GM18951 (cell line): ENCODE measurements at regions of chr4 and their contacts with region 1.

Region 1: DNA sequence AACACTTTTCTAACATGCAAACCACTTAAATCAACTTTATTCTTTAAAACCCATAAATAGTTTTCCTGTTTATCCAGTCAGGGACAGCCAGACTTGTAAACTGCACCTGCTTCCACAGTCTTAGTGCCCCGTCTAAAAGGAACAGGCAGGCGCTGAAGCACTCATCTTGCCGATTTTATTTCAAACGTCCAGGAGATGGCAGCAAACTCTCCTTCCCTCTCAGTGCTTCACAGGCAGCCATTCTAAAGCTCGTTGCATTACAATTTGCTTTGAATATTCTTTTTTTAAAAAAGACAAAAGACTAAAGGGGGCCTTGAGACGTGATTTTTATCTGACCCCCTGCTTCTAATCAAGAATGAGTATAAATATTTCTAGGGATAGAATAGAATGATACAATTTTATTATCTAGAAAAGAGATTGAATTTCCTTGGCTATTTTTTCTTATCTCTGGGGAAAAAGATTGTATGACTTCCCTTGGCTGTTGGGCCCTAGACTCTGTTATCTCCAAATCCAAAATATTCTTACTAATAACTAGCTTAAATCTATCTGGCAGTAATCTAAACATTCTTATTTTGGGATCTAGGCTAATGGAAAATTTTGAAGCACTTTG is 93.6 kb upstream of the MYOZ2 start:
- POLR2A ChIP-seq: no peak

Region 2: DNA sequence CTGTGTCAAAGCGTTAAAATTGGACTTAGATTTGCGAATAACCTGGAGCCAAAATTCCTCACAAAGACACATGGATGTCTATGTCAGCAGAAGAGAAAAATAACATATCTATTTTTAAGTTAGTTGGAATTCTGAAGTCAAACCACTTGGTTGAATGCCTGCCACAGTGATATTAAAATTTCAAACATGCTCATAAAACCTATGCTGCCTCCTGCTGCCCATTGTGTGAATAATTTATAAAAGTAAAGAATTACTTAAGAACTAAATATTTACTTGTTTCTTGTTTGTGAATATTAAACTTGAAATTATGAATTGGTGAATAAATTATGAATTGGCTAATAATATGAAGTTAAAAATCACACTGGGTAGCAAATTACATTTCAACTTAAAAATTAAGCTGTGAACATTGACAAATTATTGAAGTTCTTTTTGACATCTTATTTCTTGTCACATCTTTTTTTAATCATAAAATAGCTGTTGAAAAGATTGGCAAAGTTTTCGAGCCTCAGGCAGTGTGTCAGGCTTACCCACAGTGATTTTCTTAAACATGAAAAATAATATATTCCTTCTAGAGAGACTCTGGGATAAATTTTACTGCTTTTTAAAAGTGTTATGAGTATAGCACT is 244.4 kb after region 1 on chr4:
- in situ Hi-C with region 1: loop called (anchors 25 kb)
- POLR2A ChIP-seq: no peak

Region 3: GRCh38 chr4:119490335-119490734 is 448.3 kb after region 1 on chr4:
- in situ Hi-C with region 1: loop called (anchors 25 kb)
- POLR2A ChIP-seq: no peak